CD4-positive, alpha-beta memory T cell (primary cell): ENCODE measurements at regions of chr7 and their contacts with region 1.

Region 1: GRCh38 chr7:143372070-143372469 is 9.1 kb upstream of the ZYX start:
- DNase-seq: peak; percentile 46 to 65 (median 55)
- H3K4me3 ChIP-seq: no peak overlapping the region
- H3K4me3 Mint-ChIP-seq: peak overlapping the region in 7 of 8 donors; percentile 21 to 66 (median 62)
- H3K27ac ChIP-seq: no peak overlapping the region
- H3K27ac Mint-ChIP-seq: peak overlapping the region; percentile 65 to 90 (median 74)
- H3K4me1 ChIP-seq: peaks cover 43% of the 10 kb centered on the region
- H3K4me1 Mint-ChIP-seq: peaks cover 40 to 60% (median 50%) of the 10 kb centered on the region in 4 donors
- H3K27me3 ChIP-seq: no peaks in the 10 kb centered on the region
- H3K27me3 Mint-ChIP-seq: peaks cover 0 to 2% of the 10 kb centered on the region in 2 donors

Region 2: GRCh38 chr7:143287935-143288826 is 83.9 kb before region 1 on chr7 and contains the start of gene CASP2:
- CTCF ChIA-PET with region 1: interaction called, 4 read pairs
- POLR2A ChIA-PET with region 1: interaction called, 13 read pairs
- intact Hi-C with region 1: no loop called
- DNase-seq: peak; percentile 99 to 100 (median 99)
- H3K4me3 ChIP-seq: peak within 1 kb of the TSS; percentile 82 to 92
- H3K4me3 Mint-ChIP-seq: peak within 1 kb of the TSS; percentile 92 to 99 (median 96)
- H3K27ac ChIP-seq: peak within 1 kb of the TSS; percentile 78
- H3K27ac Mint-ChIP-seq: peak within 1 kb of the TSS; percentile 83 to 98 (median 95)
- H3K4me1 ChIP-seq: peaks cover 44% of the 10 kb centered on the region
- H3K4me1 Mint-ChIP-seq: peaks cover 39 to 75% (median 57%) of the 10 kb centered on the region in 4 donors
- H3K27me3 ChIP-seq: no peaks in the 10 kb centered on the region
- H3K27me3 Mint-ChIP-seq: no peaks in the 10 kb centered on the region
- total RNA-seq, gene CASP2: 94.3 to 96.1 TPM

Region 3: DNA sequence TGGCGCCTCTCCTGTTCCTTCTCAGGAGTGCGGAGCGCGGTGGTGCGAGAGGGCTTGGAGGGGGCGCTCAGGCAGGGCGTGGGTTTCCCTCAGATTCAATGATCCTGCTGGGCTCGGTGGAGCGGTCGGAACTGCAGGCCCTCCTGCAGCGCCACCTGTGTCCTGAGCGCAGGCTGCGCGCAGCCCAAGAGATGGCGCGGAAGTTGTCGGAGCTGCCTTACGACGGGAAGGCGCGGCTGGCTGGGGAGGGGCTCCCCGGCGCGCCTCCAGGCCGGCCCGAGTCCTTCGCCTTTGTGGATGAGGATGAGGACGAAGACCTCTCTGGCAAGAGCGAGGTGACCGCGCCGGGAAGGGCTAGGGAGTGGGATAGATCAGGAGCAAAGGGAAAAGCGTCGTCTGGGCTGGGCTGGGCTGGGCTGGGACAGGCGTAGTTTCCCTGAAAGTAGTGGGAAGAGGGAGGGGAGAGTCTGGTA is 26.6 kb before region 1 on chr7:
- CTCF ChIA-PET with region 1: interaction called, 15 read pairs
- POLR2A ChIA-PET with region 1: interaction called, 10 read pairs
- intact Hi-C with region 1: loop called (anchors 1 kb)
- DNase-seq: peak; percentile 52 to 64 (median 58)
- H3K4me3 ChIP-seq: no peak overlapping the region
- H3K4me3 Mint-ChIP-seq: peak overlapping the region; percentile 74 to 87 (median 80)
- H3K27ac ChIP-seq: no peak overlapping the region
- H3K27ac Mint-ChIP-seq: peak overlapping the region in 4 of 7 donors; percentile 55 to 70 (median 68)
- H3K4me1 ChIP-seq: peaks cover 4% of the 10 kb centered on the region
- H3K4me1 Mint-ChIP-seq: peaks cover 5 to 9% (median 7%) of the 10 kb centered on the region in 4 donors
- H3K27me3 ChIP-seq: no peaks in the 10 kb centered on the region
- H3K27me3 Mint-ChIP-seq: peaks cover 0 to 6% of the 10 kb centered on the region in 2 donors

Region 4: GRCh38 chr7:143391462-143392404 is 19.7 kb after region 1 on chr7:
- CTCF ChIA-PET with region 1: interaction called, 5 read pairs
- POLR2A ChIA-PET with region 1: interaction called, 7 read pairs
- intact Hi-C with region 1: loop called (anchors 2 kb)
- DNase-seq: no peak
- H3K4me3 ChIP-seq: no peak overlapping the region
- H3K4me3 Mint-ChIP-seq: no peak overlapping the region
- H3K27ac ChIP-seq: no peak overlapping the region
- H3K27ac Mint-ChIP-seq: no peak overlapping the region
- H3K4me1 ChIP-seq: peaks cover 7% of the 10 kb centered on the region
- H3K4me1 Mint-ChIP-seq: peaks cover 7 to 21% (median 12%) of the 10 kb centered on the region in 4 donors
- H3K27me3 ChIP-seq: no peaks in the 10 kb centered on the region
- H3K27me3 Mint-ChIP-seq: no peaks in the 10 kb centered on the region

Region 5: DNA sequence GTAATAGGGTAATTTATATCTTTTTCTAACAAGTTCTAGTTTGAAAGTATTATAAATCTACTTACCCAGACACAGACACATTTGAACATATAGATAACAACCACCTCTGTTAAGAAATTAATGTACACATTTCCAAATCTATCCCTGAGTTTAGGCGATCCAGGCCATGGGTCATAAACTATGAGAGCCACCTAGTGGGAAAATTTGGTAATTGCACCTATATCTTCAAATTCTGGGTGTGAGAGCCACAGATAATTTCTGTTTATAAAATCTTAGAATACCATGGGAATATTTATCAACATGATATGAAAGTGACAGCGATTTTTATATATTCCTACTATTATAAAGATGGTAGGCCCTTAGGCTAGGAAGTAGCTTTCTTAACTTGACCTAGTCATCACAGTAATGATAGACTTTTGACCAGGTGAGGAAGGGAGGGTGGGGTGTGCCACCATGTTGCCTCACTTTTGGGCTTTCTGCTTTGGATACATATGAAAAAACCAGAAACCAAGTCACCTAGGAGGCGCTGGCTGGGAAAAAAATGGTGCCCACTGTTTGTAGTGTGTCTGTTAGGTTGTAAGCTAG is 44.6 kb after region 1 on chr7:
- CTCF ChIA-PET with region 1: interaction called, 40 read pairs
- POLR2A ChIA-PET with region 1: interaction called, 3 read pairs
- intact Hi-C with region 1: no loop called
- DNase-seq: peak in 4 of 5 donors; percentile 47 to 62 (median 53)
- H3K4me3 ChIP-seq: no peak overlapping the region
- H3K4me3 Mint-ChIP-seq: no peak overlapping the region
- H3K27ac ChIP-seq: no peak overlapping the region
- H3K27ac Mint-ChIP-seq: no peak overlapping the region
- H3K4me1 ChIP-seq: no peaks in the 10 kb centered on the region
- H3K4me1 Mint-ChIP-seq: peaks cover 0 to 9% (median 8%) of the 10 kb centered on the region in 4 donors
- H3K27me3 ChIP-seq: no peaks in the 10 kb centered on the region
- H3K27me3 Mint-ChIP-seq: no peaks in the 10 kb centered on the region